ENCODE measurements at regions of chr3 and their contacts with region 1.

Region 1: DNA sequence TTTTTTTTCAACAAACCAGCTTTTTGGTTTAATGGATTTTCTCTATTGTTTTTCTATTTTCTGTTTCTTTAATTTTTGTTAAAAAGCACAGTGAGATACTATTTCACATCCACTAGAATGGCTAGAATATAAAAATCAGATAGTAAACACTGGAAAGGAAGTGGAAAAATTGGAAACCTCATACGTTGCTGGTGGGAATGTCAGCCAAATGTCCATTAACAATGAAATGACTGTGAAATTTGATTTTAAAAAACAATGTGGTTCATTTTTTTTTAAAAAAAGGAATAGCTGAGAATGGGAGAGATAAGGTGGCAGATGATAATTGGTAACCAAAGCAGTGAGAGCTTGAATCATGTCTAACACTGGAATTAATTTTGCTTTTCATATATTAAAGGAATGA is 19.9 kb downstream of the NR2C2 start:
- DNase-seq: no peak
- ATAC-seq: no peak
- H3K4me3 ChIP-seq: no peak overlapping the region
- H3K27ac ChIP-seq: no peak overlapping the region
- H3K4me1 ChIP-seq: no peaks in the 10 kb centered on the region
- H3K27me3 ChIP-seq: no peaks in the 10 kb centered on the region
- CTCF ChIP-seq: no peak
- EP300 ChIP-seq: no peak
- POLR2A ChIP-seq: no peak
- RAD21 ChIP-seq: no peak

Region 2: DNA sequence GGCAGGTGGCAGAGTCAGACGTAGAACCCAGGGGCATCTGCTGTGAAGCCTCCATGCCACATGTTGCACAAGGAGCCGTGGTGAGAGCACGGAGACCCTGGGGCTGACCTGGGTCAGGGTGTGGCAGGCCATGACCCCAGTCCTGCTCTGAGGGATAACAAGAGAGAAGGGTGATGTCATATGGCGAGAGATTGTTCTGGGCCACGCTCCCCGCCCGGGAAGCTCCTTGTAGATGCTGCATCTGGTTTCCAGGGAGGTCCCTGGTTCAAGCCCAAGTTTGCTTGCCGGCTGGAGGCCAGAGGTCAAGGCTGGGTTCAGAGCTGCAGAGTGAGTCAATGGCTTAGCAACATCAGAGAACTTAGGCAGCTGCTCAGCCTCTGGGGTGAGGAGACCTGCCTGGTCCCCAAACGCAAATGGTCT is 131.2 kb before region 1 on chr3:
- CTCF ChIA-PET with region 1: no interaction called
- POLR2A ChIA-PET with region 1: no interaction called
- RAD21 ChIA-PET with region 1: no interaction called
- SMC1A ChIA-PET with region 1: no interaction called
- in situ Hi-C with region 1: no loop called
- intact Hi-C with region 1: no loop called
- DNase-seq: no peak
- ATAC-seq: no peak
- H3K4me3 ChIP-seq: no peak overlapping the region
- H3K27ac ChIP-seq: no peak overlapping the region
- H3K4me1 ChIP-seq: no peaks in the 10 kb centered on the region; the same call in 1 of the 2 replicates
- H3K27me3 ChIP-seq: peaks cover 10 to 12% of the 10 kb centered on the region in 2 experiments
- CTCF ChIP-seq: no peak
- EP300 ChIP-seq: no peak
- POLR2A ChIP-seq: no peak
- RAD21 ChIP-seq: no peak

Region 3: DNA sequence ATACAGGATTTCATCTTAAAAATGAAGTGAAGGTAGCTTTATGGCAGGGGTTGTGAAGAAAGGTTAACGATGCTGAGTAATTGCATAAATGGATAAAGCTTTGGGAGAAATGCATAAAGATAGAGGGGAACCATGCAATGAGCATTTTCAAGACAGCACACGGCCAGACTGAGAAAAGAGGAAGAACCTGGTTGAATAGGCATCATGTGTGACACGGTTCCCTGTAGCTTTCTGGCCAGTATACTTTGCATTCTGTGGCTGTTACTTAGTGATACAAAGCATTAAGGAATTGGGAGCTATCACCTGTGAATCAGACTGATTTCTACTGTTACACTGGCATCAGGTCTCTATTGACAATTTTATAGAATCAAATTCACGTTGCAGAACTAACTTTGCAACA is 13.4 kb after region 1 on chr3:
- CTCF ChIA-PET with region 1: interaction called, 3 read pairs
- POLR2A ChIA-PET with region 1: interaction called, 4 read pairs
- RAD21 ChIA-PET with region 1: interaction called, 3 read pairs
- SMC1A ChIA-PET with region 1: interaction called, 12 read pairs
- in situ Hi-C with region 1: no loop called
- intact Hi-C with region 1: no loop called
- DNase-seq: no peak
- ATAC-seq: peak; percentile 88
- H3K4me3 ChIP-seq: no peak overlapping the region
- H3K27ac ChIP-seq: no peak overlapping the region
- H3K4me1 ChIP-seq: no peaks in the 10 kb centered on the region; the same call in 1 of the 2 replicates
- H3K27me3 ChIP-seq: no peaks in the 10 kb centered on the region
- CTCF ChIP-seq: no peak
- EP300 ChIP-seq: no peak
- POLR2A ChIP-seq: no peak
- RAD21 ChIP-seq: no peak

Measured in GM12878 (cell line).